ENCODE measurements at regions of chr4 and their contacts with region 1.

Region 1: DNA sequence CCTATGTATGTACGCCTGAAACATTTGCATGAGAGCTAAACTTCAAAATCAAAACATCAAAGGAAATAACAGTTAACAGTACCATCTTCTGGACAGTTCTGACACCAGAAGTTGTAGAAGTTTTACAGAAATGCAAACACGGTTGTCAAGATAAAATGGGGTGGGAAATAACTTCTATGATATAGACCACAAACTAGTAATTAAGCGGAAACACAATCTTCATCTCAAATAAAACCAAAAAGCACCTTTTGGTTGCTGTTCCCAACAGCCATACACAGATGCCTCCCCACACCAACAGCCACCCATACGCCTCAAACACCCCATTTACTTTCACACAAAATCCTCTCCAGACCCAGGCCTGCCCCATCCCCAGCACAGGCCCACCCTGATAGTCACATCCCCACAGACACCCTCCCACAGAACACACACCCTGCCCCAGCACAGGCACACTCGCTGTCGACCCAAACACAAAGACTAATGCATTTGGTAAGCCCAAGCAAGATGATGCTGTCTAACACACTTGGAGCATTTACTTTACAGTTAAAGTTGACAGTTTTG is 64.3 kb downstream of the TAPT1 start:
- DNase-seq: no peak
- ATAC-seq: no peak
- H3K4me3 ChIP-seq: no peak overlapping the region
- H3K27ac ChIP-seq: no peak overlapping the region
- H3K4me1 ChIP-seq: peaks cover 0 to 24% (median 6%) of the 10 kb centered on the region in 12 donors
- H3K27me3 ChIP-seq: no peaks in the 10 kb centered on the region
- CTCF ChIP-seq: no peak
- POLR2A ChIP-seq: no peak

Region 2: GRCh38 chr4:16034010-16034829 is 127.7 kb before region 1 on chr4:
- intact Hi-C with region 1: loop called in 2 of 10 experiments (anchors 10 kb)
- DNase-seq: no peak
- ATAC-seq: peak in 3 of 4 donors; percentile 47 to 57 (median 52)
- H3K4me3 ChIP-seq: no peak overlapping the region
- H3K27ac ChIP-seq: peak overlapping the region in 4 of 12 donors; percentile 6 to 66 (median 26)
- H3K4me1 ChIP-seq: peaks cover 0 to 25% (median 6%) of the 10 kb centered on the region in 12 donors
- H3K27me3 ChIP-seq: no peaks in the 10 kb centered on the region
- CTCF ChIP-seq: no peak
- POLR2A ChIP-seq: no peak

Region 3: DNA sequence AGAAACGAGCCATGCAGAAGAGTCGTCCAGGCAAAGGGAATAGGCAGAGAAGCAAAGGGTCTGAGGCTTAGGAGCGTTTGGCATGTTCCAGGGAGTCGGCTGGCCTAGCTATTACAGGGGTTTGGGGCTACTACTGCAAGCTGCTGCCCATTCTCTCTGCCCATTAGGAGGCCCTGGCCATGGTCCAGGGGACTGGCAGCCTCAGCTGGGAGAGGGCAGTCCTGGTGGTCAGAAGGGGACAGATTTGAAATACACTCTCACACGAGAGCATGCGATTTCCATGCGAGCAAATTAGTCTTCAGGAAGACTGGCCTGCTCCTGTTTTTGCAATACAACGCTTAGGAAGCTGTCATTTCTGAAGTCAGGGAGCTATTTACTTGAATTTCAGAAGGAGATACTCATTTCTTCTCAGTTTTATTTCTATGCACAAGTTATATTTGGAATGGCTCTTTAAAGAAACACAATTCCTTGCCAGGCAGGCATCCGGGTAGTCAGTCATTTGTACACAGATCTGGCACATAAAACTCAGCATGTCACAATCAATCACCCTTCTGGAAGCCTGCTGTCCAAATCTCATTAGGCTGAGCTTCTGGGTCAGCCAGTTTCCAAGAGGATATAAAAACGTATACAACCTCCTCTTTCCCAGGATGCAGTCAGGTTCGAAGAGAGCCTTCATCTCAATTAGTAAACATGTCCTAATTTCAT is 105.1 kb before region 1 on chr4:
- intact Hi-C with region 1: loop called in 1 of 10 experiments (anchors 10 kb)
- DNase-seq: peak in 1 of 5 donors; percentile 38
- ATAC-seq: peak; percentile 36 to 66 (median 44)
- H3K4me3 ChIP-seq: no peak overlapping the region
- H3K27ac ChIP-seq: peak overlapping the region in 4 of 12 donors; percentile 32 to 47 (median 42)
- H3K4me1 ChIP-seq: peaks cover 0 to 25% (median 17%) of the 10 kb centered on the region in 12 donors
- H3K27me3 ChIP-seq: no peaks in the 10 kb centered on the region
- CTCF ChIP-seq: no peak
- POLR2A ChIP-seq: no peak

Region 4: DNA sequence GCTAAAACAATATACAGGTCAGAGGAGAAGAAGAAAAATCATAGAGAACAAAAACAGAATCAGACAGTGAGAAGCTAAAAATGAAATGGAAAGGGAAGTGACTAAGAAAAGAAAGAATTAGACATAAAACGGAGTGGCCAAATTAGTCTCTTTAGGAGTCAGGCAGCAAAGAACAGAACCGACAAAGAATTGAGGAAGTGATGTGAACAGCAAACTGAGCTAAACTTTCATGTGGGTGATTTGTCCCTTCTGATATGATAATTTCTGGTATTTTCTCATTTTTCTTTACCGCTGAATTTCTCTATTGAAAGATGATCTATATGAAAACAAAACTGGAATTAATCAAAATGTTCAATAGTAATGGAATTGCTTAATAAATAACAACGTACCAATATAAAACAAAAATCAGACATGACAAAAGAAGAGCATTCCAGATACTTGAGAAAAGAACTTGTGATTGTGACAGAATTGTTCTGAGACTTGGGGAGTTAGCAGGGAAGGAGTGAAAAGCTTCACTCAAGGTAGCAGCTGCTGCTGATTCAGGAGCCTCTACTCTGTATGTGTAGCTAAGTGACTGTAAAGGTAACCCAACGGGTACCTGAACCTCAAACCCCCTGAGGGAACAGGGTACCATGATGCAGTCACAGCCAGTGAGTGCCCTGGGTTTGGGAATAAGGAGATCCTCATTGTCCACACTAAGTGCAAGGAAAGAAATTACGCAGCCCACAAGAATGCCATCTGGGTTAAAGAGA is 55.5 kb after region 1 on chr4:
- intact Hi-C with region 1: no loop called
- DNase-seq: no peak
- ATAC-seq: no peak
- H3K4me3 ChIP-seq: no peak overlapping the region
- H3K27ac ChIP-seq: peak overlapping the region in 1 of 12 donors; percentile 18
- H3K4me1 ChIP-seq: peaks cover 0 to 67% (median 27%) of the 10 kb centered on the region in 12 donors
- H3K27me3 ChIP-seq: no peaks in the 10 kb centered on the region
- CTCF ChIP-seq: no peak
- POLR2A ChIP-seq: no peak